Mucosa of descending colon (tissue), 3 donors: ENCODE measurements at regions of chr12 and their contacts with region 1.

Region 1: DNA sequence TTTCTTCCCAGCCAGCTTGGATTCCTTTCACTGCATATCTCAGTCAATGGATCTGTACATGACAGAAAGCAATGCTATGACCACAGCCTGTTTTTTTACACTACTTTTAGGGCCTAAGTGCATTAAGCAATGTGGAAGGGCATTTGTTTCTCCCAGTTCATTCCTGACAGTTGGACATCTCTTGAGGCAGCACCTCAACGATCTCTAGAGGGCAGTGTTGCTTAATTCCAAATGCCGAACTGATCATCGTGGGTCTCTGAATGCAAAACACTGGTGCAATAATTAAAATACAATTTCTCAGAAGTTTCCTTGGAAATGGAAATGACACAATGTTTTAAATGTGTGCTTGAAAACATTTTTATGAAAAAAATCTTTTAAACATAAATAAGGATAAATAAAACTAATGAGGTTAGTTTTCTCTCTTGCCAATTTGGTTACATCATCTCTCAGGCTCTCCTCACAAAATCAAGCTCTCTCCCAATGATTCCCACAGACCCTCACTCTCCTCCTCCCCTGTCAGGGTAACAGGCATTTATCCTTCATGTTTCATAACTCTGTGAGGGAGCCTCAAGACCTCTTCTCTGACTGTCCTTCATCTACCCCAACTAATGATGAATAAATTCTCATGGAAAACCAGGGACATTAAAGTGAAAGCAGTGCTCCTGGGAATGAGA is 192.4 kb upstream of the SLC16A7 start:
- DNase-seq: peak in 1 of 3 donors; percentile 77
- ATAC-seq: peak; percentile 65
- H3K4me3 ChIP-seq: no peak overlapping the region
- H3K4me1 ChIP-seq: no peaks in the 10 kb centered on the region
- CTCF ChIP-seq: peak; percentile 52

Region 2: GRCh38 chr12:59317598-59317997 is 85.8 kb before region 1 on chr12:
- intact Hi-C with region 1: no loop called
- DNase-seq: no peak
- ATAC-seq: no peak
- H3K4me3 ChIP-seq: no peak overlapping the region
- H3K4me1 ChIP-seq: no peaks in the 10 kb centered on the region
- CTCF ChIP-seq: no peak

Region 3: GRCh38 chr12:59808317-59808910 is 405.0 kb after region 1 on chr12:
- intact Hi-C with region 1: loop called in 1 of 2 experiments (anchors 5 kb)
- DNase-seq: peak in 1 of 3 donors; percentile 6
- ATAC-seq: peak; percentile 43
- H3K4me3 ChIP-seq: no peak overlapping the region
- H3K4me1 ChIP-seq: no peaks in the 10 kb centered on the region
- CTCF ChIP-seq: no peak